ENCODE measurements at regions of chr2 and their contacts with region 1.

Region 1: GRCh38 chr2:62456721-62457539 is 49.1 kb downstream of the TMEM17 start:
- DNase-seq: peak in 1 of 2 donors; percentile 94
- H3K4me3 ChIP-seq: peak overlapping the region; percentile 21
- CTCF ChIP-seq: peak in 1 of 3 donors; percentile 88
- POLR2A ChIP-seq: no peak

Region 2: GRCh38 chr2:62435720-62436119 is 21.2 kb before region 1 on chr2:
- intact Hi-C with region 1: no loop called
- DNase-seq: no peak
- H3K4me3 ChIP-seq: no peak overlapping the region
- CTCF ChIP-seq: no peak
- POLR2A ChIP-seq: no peak

Region 3: GRCh38 chr2:62550461-62550860 is 93.5 kb after region 1 on chr2:
- intact Hi-C with region 1: no loop called
- DNase-seq: no peak
- H3K4me3 ChIP-seq: no peak overlapping the region
- CTCF ChIP-seq: no peak
- POLR2A ChIP-seq: no peak

Region 4: GRCh38 chr2:62641410-62641843 is 184.5 kb after region 1 on chr2:
- intact Hi-C with region 1: no loop called
- DNase-seq: no peak
- H3K4me3 ChIP-seq: no peak overlapping the region
- CTCF ChIP-seq: no peak
- POLR2A ChIP-seq: no peak

Region 5: GRCh38 chr2:62774555-62775366 is 317.8 kb after region 1 on chr2:
- intact Hi-C with region 1: loop called (anchors 5 kb)
- DNase-seq: no peak
- H3K4me3 ChIP-seq: no peak overlapping the region
- CTCF ChIP-seq: peak in 1 of 3 donors; percentile 59
- POLR2A ChIP-seq: no peak